Panc1 (cell line): ENCODE measurements at regions of chr13 and their contacts with region 1.

Region 1: GRCh38 chr13:25587326-25587980 is 215.7 kb downstream of the ATP8A2 start:
- DNase-seq: no peak
- ATAC-seq: no peak
- H3K4me3 ChIP-seq: no peak overlapping the region
- H3K27ac ChIP-seq: no peak overlapping the region
- H3K4me1 ChIP-seq: no peaks in the 10 kb centered on the region
- H3K27me3 ChIP-seq: no peaks in the 10 kb centered on the region; the same call in 1 of the 2 replicates
- CTCF ChIP-seq: no peak

Region 2: DNA sequence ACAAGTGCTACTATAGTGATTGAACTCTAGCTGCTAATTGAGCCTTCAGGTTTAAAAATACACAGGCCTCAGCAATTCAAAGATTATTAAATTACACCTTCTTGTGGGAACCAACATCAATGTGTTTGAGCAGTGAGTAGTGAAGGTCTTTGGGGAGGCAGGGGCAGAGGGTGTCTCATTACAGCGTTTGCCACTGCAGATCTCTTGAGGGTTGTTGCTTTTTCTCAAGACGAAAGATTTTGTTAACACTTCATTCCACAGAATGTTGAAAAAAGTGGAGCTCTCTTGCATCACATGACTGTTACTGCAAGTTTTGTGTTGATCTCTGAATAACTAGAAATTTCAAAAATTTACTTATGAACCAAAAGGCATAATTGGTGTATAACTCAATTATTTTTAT is 38.0 kb after region 1 on chr13:
- CTCF ChIA-PET with region 1: no interaction called
- POLR2A ChIA-PET with region 1: interaction called, 12 read pairs
- in situ Hi-C with region 1: no loop called
- intact Hi-C with region 1: no loop called
- DNase-seq: no peak
- ATAC-seq: no peak
- H3K4me3 ChIP-seq: no peak overlapping the region
- H3K27ac ChIP-seq: no peak overlapping the region
- H3K4me1 ChIP-seq: no peaks in the 10 kb centered on the region
- H3K27me3 ChIP-seq: no peaks in the 10 kb centered on the region
- CTCF ChIP-seq: no peak